Calu3 (cell line): ENCODE measurements at regions of chrX and their contacts with region 1.

Region 1: GRCh38 chrX:109856974-109857373 is 123.9 kb upstream of the ACSL4 start:
- DNase-seq: no peak
- H3K4me3 Mint-ChIP-seq: no peak overlapping the region
- H3K27ac Mint-ChIP-seq: no peak overlapping the region
- H3K4me1 Mint-ChIP-seq: peaks cover 52% of the 10 kb centered on the region
- H3K27me3 Mint-ChIP-seq: no peaks in the 10 kb centered on the region
- CTCF ChIP-seq: peak; percentile 36

Region 2: GRCh38 chrX:109709129-109709631 is 147.8 kb before region 1 on chrX:
- CTCF ChIA-PET with region 1: interaction called, 41 read pairs
- intact Hi-C with region 1: loop called (anchors 1 kb)
- DNase-seq: no peak
- H3K4me3 Mint-ChIP-seq: no peak overlapping the region
- H3K27ac Mint-ChIP-seq: no peak overlapping the region
- H3K4me1 Mint-ChIP-seq: peaks cover 8% of the 10 kb centered on the region
- H3K27me3 Mint-ChIP-seq: no peaks in the 10 kb centered on the region
- CTCF ChIP-seq: no peak

Region 3: GRCh38 chrX:109714340-109714958 is 142.5 kb before region 1 on chrX:
- CTCF ChIA-PET with region 1: interaction called, 41 read pairs
- intact Hi-C with region 1: loop called (anchors 1 kb)
- DNase-seq: no peak
- H3K4me3 Mint-ChIP-seq: no peak overlapping the region
- H3K27ac Mint-ChIP-seq: no peak overlapping the region
- H3K4me1 Mint-ChIP-seq: peaks cover 8% of the 10 kb centered on the region
- H3K27me3 Mint-ChIP-seq: no peaks in the 10 kb centered on the region
- CTCF ChIP-seq: no peak

Region 4: GRCh38 chrX:109732780-109733657 is 124.0 kb before region 1 on chrX and contains the start of gene ACSL4:
- CTCF ChIA-PET with region 1: interaction called, 11 read pairs
- intact Hi-C with region 1: loop called (anchors 2 kb)
- DNase-seq: peak; percentile 92
- H3K4me3 Mint-ChIP-seq: peak within 1 kb of the TSS; percentile 91
- H3K27ac Mint-ChIP-seq: peak within 1 kb of the TSS; percentile 92
- H3K4me1 Mint-ChIP-seq: no peaks in the 10 kb centered on the region
- H3K27me3 Mint-ChIP-seq: no peaks in the 10 kb centered on the region
- CTCF ChIP-seq: no peak
- total RNA-seq, gene ACSL4: 64.8 and 72.4 TPM in 2 replicates

Region 5: DNA sequence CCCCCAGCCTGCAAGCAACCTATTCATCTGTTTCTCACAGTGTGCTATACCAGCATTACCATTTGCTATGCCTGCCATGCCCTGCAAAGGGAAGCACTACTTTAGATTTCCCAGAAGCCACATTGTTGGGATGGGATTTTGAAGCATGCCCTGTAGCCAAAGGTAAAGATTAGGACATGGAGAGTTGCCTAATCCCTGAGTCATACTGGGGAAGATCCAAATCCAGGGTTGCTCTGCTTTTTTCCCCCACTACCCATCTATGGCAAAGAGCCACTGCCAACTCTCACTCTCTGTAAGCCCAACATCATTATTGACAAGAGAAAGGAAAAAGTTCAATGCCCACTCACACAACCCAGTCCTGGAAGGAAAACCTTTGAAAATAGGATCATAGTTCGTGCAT is 109.3 kb after region 1 on chrX:
- CTCF ChIA-PET with region 1: no interaction called
- intact Hi-C with region 1: no loop called
- DNase-seq: no peak
- H3K4me3 Mint-ChIP-seq: no peak overlapping the region
- H3K27ac Mint-ChIP-seq: no peak overlapping the region
- H3K4me1 Mint-ChIP-seq: no peaks in the 10 kb centered on the region
- H3K27me3 Mint-ChIP-seq: no peaks in the 10 kb centered on the region
- CTCF ChIP-seq: no peak

Region 6: DNA sequence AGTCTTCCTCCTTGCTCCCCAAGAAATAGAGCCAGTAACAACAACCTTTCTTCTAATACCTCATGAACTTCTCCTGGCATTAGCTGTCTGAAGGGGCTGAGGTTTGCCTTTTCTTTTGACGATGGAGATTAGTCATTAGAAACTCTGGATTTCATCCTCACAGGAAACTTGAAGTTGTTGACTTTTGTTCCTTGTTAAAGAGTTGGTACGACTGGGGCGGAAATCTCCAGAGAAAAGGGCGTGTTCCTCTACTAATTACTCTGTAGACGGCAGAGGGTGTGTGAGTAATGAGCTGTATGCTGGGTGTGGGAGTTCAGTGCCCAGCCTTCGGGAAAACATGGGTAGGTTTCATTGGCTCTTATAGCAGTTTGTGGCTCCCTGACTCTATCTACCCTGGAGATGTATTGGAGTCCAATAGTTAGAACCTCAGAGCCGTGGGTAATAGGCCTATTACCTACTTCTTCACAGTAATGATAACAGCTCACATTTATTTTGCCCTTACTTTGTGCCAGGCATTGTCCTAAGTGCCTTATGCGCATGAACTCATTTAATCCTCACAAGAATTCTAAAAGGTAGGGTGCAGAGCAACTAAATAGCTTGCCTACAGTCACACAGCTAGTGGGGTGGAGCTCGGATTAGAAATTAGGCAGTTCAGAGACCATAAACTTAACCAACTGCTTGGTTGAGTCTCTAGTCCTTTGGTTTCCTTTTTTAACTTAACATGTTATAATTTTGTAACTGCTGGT is 169.3 kb after region 1 on chrX:
- CTCF ChIA-PET with region 1: no interaction called
- intact Hi-C with region 1: no loop called
- DNase-seq: peak; percentile 52
- H3K4me3 Mint-ChIP-seq: peak overlapping the region; percentile 49
- H3K27ac Mint-ChIP-seq: peak overlapping the region; percentile 94
- H3K4me1 Mint-ChIP-seq: peaks cover 21% of the 10 kb centered on the region
- H3K27me3 Mint-ChIP-seq: no peaks in the 10 kb centered on the region
- CTCF ChIP-seq: no peak